Activated CD4-positive, alpha-beta memory T cell treated with anti-CD3 and anti-CD28 coated beads, Interleukin-2, amount 10 ng/mL, durations not matched to agents 7 days and 5 days (primary cell): ENCODE measurements at regions of chr17 and their contacts with region 1.

Region 1: GRCh38 chr17:51371732-51372151 is 111.4 kb downstream of the UTP18 start:
- DNase-seq: peak; percentile 60
- H3K4me3 Mint-ChIP-seq: no peak overlapping the region
- H3K27ac Mint-ChIP-seq: no peak overlapping the region
- H3K4me1 Mint-ChIP-seq: peaks cover 14% of the 10 kb centered on the region
- H3K27me3 Mint-ChIP-seq: peaks cover 8% of the 10 kb centered on the region

Region 2: DNA sequence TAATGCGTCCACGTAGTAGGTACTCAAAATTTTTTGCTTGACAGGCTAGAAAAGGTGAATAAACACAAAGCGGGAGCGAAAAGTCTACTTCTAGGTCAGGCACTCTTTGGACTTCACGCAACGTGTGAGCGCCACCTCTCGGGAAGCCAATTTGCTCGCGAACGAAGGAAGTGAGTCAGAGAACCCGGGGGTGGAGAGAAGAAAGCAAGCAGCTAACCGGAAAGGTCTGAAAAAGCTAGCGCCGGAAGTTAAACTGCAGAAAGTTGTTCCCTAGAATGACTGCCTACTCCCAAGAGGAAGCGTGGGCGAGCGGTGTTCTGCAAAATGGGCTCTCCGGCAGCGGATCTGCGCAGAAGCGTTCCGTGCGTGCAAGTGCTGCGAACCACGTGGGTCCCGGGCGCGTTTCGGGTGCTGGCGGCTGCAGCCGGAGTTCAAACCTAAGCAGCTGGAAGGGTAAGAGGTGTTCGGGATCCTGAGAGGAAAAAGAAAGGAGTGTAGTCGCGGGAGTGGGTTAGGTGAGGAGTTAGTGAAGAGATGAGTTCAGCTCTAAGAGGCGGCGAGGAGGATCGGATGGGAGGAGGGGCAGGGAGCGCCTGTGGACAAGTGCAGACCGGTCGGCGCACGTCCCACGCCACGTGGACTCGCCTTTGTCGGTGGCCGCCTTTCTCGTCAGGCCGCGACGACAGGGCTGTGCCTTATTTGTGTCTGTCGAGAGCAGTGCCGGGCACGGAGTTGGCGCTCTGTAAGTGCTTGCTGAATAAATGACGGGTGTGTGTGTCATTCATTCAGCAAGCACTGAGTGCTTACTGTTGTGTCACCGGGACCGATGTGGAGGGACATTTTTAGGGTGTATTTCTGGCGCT is 218.3 kb before region 1 on chr17 and contains the start of gene NME1:
- CTCF ChIA-PET with region 1: no interaction called
- POLR2A ChIA-PET with region 1: no interaction called
- DNase-seq: peak; percentile 98
- H3K4me3 Mint-ChIP-seq: no peak within 1 kb of the TSS
- H3K27ac Mint-ChIP-seq: no peak within 1 kb of the TSS
- H3K4me1 Mint-ChIP-seq: peaks cover 10% of the 10 kb centered on the region
- H3K27me3 Mint-ChIP-seq: no peaks in the 10 kb centered on the region
- total RNA-seq, gene NME1: 87.9 to 90.8 TPM

Region 3: GRCh38 chr17:51435641-51436091 is 63.9 kb after region 1 on chr17:
- CTCF ChIA-PET with region 1: interaction called, 10 read pairs
- POLR2A ChIA-PET with region 1: no interaction called
- DNase-seq: peak; percentile 75
- H3K4me3 Mint-ChIP-seq: peak overlapping the region; percentile 54
- H3K27ac Mint-ChIP-seq: peak overlapping the region; percentile 80
- H3K4me1 Mint-ChIP-seq: peaks cover 66% of the 10 kb centered on the region
- H3K27me3 Mint-ChIP-seq: no peaks in the 10 kb centered on the region

Region 4: DNA sequence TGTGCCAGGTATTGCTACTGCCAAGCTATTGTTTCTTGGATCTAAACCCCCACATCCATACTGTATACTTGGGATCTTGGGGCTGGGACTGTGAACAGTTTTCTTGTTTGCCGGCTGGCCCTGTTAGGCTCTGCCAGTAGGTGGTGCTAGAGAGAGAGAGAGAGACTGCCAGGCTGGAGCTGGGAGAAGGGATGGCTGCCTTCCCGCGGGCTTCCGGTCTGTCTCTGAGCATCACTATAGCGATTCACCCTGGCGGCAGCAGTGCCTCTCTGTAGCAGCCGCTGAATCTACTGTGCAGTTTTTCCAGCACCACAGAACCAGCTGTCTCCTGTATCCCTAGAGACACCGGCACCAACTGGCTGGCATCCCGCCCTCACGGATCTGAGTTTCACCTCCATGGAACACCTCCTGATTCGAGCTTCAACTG is 89.8 kb after region 1 on chr17:
- CTCF ChIA-PET with region 1: interaction called, 11 read pairs
- POLR2A ChIA-PET with region 1: no interaction called
- DNase-seq: peak; percentile 62
- H3K4me3 Mint-ChIP-seq: no peak overlapping the region
- H3K27ac Mint-ChIP-seq: no peak overlapping the region
- H3K4me1 Mint-ChIP-seq: no peaks in the 10 kb centered on the region
- H3K27me3 Mint-ChIP-seq: peaks cover 2% of the 10 kb centered on the region

Region 5: GRCh38 chr17:51640108-51640622 is 268.4 kb after region 1 on chr17:
- CTCF ChIA-PET with region 1: interaction called, 13 read pairs
- POLR2A ChIA-PET with region 1: no interaction called
- DNase-seq: peak; percentile 19
- H3K4me3 Mint-ChIP-seq: no peak overlapping the region
- H3K27ac Mint-ChIP-seq: no peak overlapping the region
- H3K4me1 Mint-ChIP-seq: no peaks in the 10 kb centered on the region
- H3K27me3 Mint-ChIP-seq: peaks cover 7% of the 10 kb centered on the region

Region 6: GRCh38 chr17:52106638-52107261 is 735.0 kb after region 1 on chr17:
- CTCF ChIA-PET with region 1: interaction called, 11 read pairs
- POLR2A ChIA-PET with region 1: no interaction called
- DNase-seq: peak; percentile 36
- H3K4me3 Mint-ChIP-seq: no peak overlapping the region
- H3K27ac Mint-ChIP-seq: no peak overlapping the region
- H3K4me1 Mint-ChIP-seq: no peaks in the 10 kb centered on the region
- H3K27me3 Mint-ChIP-seq: no peaks in the 10 kb centered on the region